ENCODE measurements at regions of chr10 and their contacts with region 1.

Region 1: GRCh38 chr10:6401562-6402348 is 178.3 kb downstream of the PRKCQ start:
- DNase-seq: peak; percentile 76
- ATAC-seq: peak; percentile 89
- H3K4me3 Mint-ChIP-seq: peak overlapping the region; percentile 56
- H3K27ac Mint-ChIP-seq: peak overlapping the region; percentile 78
- H3K4me1 Mint-ChIP-seq: peaks cover 49% of the 10 kb centered on the region
- H3K27me3 Mint-ChIP-seq: peaks cover 11% of the 10 kb centered on the region

Region 2: DNA sequence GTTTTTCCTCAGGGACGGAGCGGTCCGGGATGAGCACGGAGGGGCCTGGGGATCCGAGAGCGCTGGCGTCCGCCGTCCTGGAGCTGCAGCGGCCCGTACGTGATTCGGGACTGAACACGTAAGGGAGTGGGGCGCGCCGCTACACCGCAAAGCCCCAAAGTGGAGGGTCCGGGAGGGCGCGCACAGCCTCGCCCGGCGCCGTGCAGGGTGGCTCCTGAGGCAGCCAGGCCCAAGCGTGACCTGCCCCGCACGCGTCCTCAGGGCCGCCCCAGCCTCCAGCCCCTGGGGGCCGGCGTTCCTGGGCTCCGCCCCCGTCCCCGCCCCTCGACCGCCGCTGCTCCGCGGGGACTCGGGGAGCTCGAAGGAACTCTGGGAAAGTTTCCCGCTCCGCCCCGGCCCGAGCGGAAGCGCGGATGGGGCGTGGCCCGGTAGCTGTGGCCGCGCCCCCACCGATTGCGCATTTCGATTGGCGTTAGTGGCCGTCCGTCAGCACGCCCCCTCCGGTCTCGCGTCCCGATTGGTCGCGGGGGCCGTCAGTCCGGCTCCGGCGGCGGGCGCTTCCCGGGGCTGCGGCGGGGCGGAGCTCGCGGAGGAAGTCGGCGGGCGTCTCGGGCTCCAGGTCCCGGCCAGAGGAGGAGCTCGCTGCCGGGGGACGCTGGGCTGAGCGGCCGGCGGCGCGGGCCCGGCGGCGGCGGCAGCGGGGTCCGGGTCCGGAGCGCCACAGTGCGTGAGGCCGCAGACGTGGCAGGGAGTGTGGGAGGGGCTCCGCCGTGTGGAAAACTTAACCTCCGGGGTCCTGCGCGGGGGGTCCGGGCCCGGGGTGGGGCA is 511.9 kb before region 1 on chr10 and contains the starts of genes ANKRD16 and FBH1:
- CTCF ChIA-PET with region 1: interaction called, 3 read pairs
- POLR2A ChIA-PET with region 1: no interaction called
- intact Hi-C with region 1: loop called in 1 of 2 experiments (anchors 5 kb)
- DNase-seq: peak; percentile 99
- ATAC-seq: peak; percentile 87
- H3K4me3 Mint-ChIP-seq: peak within 1 kb of the TSS; percentile 90
- H3K27ac Mint-ChIP-seq: peak within 1 kb of the TSS; percentile 84
- H3K4me1 Mint-ChIP-seq: peaks cover 53% of the 10 kb centered on the region
- H3K27me3 Mint-ChIP-seq: no peaks in the 10 kb centered on the region
- total RNA-seq, gene ANKRD16: 7.5 to 8.3 TPM
- total RNA-seq, gene FBH1: 53.3 to 56.2 TPM

Region 3: GRCh38 chr10:6151087-6151977 is 250.4 kb before region 1 on chr10:
- CTCF ChIA-PET with region 1: interaction called, 13 read pairs
- POLR2A ChIA-PET with region 1: no interaction called
- intact Hi-C with region 1: no loop called
- DNase-seq: peak; percentile 69
- ATAC-seq: peak; percentile 82
- H3K4me3 Mint-ChIP-seq: peak overlapping the region; percentile 43
- H3K27ac Mint-ChIP-seq: peak overlapping the region; percentile 73
- H3K4me1 Mint-ChIP-seq: peaks cover 59% of the 10 kb centered on the region
- H3K27me3 Mint-ChIP-seq: no peaks in the 10 kb centered on the region

Region 4: DNA sequence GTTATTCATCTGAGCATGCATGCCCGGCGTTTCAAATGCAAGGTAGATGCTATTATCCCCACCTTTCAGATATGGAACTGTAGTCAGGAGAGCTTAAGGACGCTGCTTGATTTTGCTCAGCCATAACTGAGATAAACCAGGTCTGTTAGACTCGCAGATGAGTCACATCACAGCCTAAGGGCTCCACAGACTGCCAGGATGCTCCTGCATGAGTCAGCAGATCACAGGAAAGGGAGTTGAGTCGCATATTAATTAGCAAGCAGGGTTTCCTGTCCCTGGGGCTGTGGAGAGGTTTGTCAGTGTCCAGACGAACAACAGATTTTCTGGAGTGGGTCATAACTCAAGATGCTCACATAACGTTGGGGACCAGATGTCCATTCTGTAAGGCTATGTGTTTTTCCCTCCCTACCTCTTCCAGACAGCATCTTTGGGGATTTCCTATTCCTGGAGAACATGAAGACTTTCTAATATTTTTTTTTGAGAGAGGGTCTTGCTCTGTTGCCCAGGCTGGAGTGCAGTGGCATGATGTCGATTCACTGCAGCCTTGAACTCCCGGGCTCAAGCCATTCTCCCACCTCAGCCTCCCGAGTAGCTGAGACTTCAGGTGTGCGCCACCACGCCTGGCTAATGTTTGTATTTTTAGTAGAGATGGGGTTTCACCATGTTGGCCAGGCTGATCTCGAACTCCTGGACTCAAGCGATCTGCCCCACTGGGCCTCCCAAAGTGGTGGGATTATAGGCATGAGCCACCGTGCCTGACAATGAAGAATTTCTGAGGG is 162.4 kb before region 1 on chr10:
- CTCF ChIA-PET with region 1: interaction called, 15 read pairs
- POLR2A ChIA-PET with region 1: no interaction called
- intact Hi-C with region 1: loop called (anchors 10 kb)
- DNase-seq: peak; percentile 84
- ATAC-seq: peak; percentile 92
- H3K4me3 Mint-ChIP-seq: no peak overlapping the region
- H3K27ac Mint-ChIP-seq: peak overlapping the region; percentile 45
- H3K4me1 Mint-ChIP-seq: peaks cover 23% of the 10 kb centered on the region
- H3K27me3 Mint-ChIP-seq: no peaks in the 10 kb centered on the region

Region 5: GRCh38 chr10:6292741-6293151 is 109.0 kb before region 1 on chr10:
- CTCF ChIA-PET with region 1: interaction called, 6 read pairs
- POLR2A ChIA-PET with region 1: no interaction called
- intact Hi-C with region 1: loop called in 1 of 2 experiments (anchors 5 kb)
- DNase-seq: no peak
- ATAC-seq: no peak
- H3K4me3 Mint-ChIP-seq: no peak overlapping the region
- H3K27ac Mint-ChIP-seq: peak overlapping the region; percentile 87
- H3K4me1 Mint-ChIP-seq: peaks cover 63% of the 10 kb centered on the region
- H3K27me3 Mint-ChIP-seq: no peaks in the 10 kb centered on the region

Region 6: GRCh38 chr10:6388261-6388893 is 13.4 kb before region 1 on chr10:
- CTCF ChIA-PET with region 1: interaction called, 17 read pairs
- POLR2A ChIA-PET with region 1: no interaction called
- intact Hi-C with region 1: no loop called
- DNase-seq: no peak
- ATAC-seq: peak; percentile 79
- H3K4me3 Mint-ChIP-seq: no peak overlapping the region
- H3K27ac Mint-ChIP-seq: no peak overlapping the region
- H3K4me1 Mint-ChIP-seq: peaks cover 18% of the 10 kb centered on the region
- H3K27me3 Mint-ChIP-seq: no peaks in the 10 kb centered on the region

Region 7: DNA sequence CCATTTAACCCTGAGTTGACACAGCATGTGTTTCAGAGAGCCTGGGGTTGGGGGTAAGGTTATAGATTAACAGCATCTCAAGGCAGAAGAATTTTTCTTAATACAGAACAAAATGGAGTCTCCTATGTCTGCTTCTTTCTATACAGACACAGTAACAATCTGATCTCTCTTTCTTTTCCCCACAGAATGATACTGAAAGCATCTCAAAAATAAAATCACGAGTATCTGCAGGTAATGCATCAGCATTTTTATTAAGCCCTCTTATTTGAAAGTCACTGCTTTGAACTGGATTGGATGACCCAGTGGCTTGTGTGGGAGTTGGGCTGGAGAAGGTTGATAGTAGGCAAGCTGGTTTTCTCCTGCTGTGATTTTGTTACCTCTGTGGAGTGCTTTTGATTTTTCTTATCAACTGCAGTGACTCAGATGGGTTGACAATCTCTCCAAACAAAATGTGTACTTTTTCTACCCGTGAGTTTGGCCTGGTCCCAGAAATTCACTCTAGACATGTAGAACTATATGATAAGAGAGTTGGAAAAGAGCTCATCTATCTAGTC is 431.8 kb after region 1 on chr10:
- CTCF ChIA-PET with region 1: no interaction called
- POLR2A ChIA-PET with region 1: no interaction called
- intact Hi-C with region 1: no loop called
- DNase-seq: no peak
- ATAC-seq: no peak
- H3K4me3 Mint-ChIP-seq: no peak overlapping the region
- H3K27ac Mint-ChIP-seq: no peak overlapping the region
- H3K4me1 Mint-ChIP-seq: no peaks in the 10 kb centered on the region
- H3K27me3 Mint-ChIP-seq: peaks cover 2% of the 10 kb centered on the region